ENCODE measurements at regions of chr1 and their contacts with region 1.

Region 1: DNA sequence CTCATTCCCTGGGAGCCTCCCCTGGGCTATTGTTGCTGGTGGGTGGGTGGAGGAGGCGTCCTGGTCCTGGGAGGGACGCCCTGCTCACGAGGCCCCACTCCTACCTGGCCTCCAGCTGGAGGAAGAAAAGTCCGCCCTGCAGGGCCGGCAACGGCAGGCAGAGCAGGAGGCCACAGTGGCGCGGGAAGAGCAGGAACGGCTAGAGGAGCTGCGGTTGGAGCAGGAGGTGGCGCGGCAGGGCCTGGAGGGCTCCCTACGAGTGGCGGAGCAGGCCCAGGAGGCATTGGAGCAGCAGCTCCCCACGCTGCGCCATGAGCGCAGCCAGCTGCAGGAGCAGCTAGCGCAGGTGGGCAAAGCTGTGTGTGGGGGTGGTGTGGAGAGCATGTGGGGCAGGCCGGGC is 24.9 kb downstream of the CROCC start:
- DNase-seq: no peak
- ATAC-seq: no peak
- H3K4me3 ChIP-seq: no peak overlapping the region
- H3K27ac ChIP-seq: no peak overlapping the region
- H3K4me1 ChIP-seq: no peaks in the 10 kb centered on the region
- H3K27me3 ChIP-seq: no peaks in the 10 kb centered on the region

Region 2: DNA sequence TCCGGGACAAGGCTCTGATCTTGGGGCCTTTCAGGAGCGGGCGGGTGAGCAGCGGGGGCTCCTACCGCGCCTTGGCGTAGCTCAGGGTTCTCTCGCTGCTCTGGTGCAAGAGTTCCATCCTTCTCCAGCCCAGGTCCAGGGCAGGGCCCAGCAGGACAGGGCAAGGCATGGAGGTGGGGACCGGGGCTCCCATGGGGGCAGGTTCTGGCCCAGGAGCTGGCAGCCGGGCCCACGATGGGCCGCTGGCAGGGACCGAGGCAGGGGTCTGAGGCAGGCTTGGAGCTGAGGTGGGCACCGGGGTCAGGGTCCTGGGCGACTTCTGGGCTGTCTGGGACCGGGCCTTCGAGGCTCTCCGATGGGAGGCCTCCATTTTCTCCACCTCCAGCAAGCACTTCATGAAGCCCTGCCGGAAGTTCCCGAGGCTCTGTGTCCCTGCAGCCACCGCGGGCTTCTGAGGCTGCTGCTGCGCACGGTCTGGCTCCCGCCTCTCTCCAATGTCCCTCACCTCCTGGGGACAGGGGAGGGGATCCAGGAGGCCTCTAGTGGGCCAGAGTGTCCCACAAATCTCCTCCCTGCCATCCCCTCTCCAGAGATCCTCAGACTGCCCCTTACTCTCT is 537.0 kb before region 1 on chr1:
- intact Hi-C with region 1: no loop called
- DNase-seq: no peak
- ATAC-seq: no peak
- H3K4me3 ChIP-seq: no peak overlapping the region
- H3K27ac ChIP-seq: no peak overlapping the region
- H3K4me1 ChIP-seq: no peaks in the 10 kb centered on the region
- H3K27me3 ChIP-seq: no peaks in the 10 kb centered on the region

Region 3: DNA sequence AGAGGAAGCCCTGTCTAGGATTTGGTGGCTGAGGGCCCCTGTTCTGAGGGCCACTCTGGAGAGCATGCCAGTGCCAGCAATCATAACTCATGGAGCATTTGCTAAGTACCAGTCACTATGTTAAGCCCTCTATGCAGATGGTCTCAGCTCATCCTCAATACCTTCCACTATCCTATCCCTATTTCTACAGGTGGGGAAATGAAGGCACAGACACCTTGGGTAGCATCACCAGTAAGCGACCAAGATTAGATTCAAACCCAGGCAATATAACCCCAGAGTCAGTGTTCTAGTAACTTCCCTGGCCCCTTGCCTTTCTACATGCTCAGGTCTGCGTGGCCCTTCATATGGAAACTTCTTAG is 325.4 kb before region 1 on chr1:
- intact Hi-C with region 1: loop called in 1 of 2 experiments (anchors 5 kb)
- DNase-seq: no peak
- ATAC-seq: no peak
- H3K4me3 ChIP-seq: no peak overlapping the region
- H3K27ac ChIP-seq: no peak overlapping the region
- H3K4me1 ChIP-seq: no peaks in the 10 kb centered on the region
- H3K27me3 ChIP-seq: no peaks in the 10 kb centered on the region

Region 4: DNA sequence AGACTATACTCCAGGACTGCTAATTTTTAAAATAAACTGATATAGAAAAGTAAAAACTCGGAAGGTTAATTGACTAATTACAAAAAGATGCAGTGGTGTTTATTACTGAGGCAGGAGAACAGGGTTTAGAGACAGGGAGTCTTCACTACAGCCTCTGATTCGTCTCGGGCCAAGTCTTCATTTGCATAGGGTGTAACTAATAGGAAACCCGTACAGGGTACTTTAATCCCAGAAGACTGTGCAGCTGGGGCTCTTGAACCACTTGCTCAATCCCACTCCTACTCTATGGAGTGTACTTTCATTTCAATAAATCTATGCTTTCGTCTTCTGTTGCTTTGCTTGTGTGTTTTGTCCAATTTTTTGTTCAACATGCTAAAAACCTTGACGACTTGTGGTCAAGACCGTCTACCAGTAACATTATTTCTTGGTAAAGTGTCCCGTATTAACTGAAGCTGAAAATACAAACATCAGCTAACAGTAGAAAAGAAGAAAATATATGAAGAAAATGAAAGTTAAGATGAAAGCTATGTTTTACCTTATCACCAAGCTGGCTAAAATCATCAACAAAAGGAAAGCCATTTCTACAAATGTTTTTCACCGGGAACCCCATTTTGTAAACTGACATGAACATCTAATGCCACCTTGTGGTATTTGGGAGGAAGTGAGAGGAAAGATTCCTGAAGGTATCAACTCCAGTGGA is 99.1 kb after region 1 on chr1:
- intact Hi-C with region 1: loop called (anchors 1 to 2 kb)
- DNase-seq: no peak
- ATAC-seq: peak; percentile 62
- H3K4me3 ChIP-seq: peak overlapping the region in 1 of 2 donors; percentile 34
- H3K27ac ChIP-seq: no peak overlapping the region
- H3K4me1 ChIP-seq: no peaks in the 10 kb centered on the region
- H3K27me3 ChIP-seq: no peaks in the 10 kb centered on the region